Astrocyte of the cerebellum (primary cell): ENCODE measurements at regions of chr10 and their contacts with region 1.

Region 1: GRCh38 chr10:49426592-49427360 is 30.9 kb upstream of the DRGX start:
- DNase-seq: no peak
- H3K4me3 ChIP-seq: no peak overlapping the region
- CTCF ChIP-seq: no peak

Region 2: DNA sequence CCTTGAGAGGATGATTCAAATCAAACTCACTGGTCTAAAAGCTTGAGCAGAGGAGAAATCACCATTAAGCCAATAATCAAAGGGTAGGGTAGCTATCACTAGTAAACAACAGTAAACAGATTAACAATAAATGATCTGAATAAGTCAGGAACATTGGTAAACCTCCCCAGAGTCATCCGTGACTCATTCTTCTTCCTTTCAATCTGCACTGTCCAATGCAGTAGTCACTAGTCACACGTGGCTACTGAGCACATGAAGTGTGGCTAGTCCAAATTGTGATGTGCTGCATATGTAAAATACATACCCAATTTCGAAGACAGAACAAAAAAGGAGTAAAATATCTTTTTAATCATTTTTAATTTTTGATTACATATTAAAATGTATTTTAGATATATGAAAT is 48.1 kb after region 1 on chr10:
- in situ Hi-C with region 1: loop called (anchors 5 kb)
- DNase-seq: no peak
- H3K4me3 ChIP-seq: no peak overlapping the region
- CTCF ChIP-seq: no peak

Region 3: DNA sequence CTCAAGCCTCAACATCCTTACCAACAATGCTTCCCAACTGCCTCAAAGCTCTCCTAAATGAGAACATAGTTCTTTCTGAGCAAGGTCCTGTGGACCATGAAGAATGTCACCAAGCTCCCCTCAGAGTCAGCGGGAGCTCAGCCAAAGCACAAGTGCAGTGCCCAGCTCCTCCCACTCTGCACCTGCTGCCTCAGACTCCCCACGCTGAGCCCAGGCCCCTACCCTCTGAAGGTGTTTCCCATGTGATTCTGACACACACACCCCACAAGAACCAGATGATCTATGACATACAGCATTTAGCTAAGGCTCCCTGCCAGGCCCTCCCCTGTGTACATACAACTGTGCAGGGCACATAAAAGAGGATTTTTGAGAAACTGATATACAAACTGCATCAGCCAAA is 92.9 kb after region 1 on chr10:
- in situ Hi-C with region 1: loop called (anchors 5 kb)
- DNase-seq: no peak
- H3K4me3 ChIP-seq: no peak overlapping the region
- CTCF ChIP-seq: no peak